Astrocyte of the cerebellum (primary cell): ENCODE measurements at regions of chr10 and their contacts with region 1.

Region 1: DNA sequence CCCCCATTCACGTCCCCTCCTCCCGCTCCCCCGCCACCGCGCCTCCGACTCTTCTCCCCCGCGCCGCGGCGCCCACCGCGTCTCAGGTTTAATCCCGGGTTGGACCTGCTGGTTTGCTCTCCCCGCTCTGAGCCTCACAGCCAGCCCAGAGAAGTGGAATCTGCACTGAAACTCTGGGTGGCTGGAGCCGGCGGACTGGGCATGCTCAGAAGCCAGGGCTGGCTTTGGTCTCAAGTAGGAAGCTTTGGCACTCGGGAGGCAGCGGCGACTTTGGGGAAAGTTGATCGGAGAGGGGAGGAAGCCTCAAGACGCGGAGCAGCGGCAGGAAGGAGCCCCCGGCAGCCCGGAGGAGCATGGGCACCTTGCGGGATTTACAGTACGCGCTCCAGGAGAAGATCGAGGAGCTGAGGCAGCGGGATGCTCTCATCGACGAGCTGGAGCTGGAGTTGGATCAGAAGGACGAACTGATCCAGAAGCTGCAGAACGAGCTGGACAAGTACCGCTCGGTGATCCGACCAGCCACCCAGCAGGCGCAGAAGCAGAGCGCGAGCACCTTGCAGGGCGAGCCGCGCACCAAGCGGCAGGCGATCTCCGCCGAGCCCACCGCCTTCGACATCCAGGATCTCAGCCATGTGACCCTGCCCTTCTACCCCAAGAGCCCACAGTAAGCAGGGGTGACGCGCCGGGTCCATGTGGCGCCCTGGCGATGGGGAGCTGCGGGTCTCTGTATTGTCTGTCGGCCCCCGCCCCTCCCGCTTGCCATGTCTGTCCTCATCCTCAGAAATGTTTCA is at the start of gene PRKG1:
- DNase-seq: peak; percentile 46
- H3K4me3 ChIP-seq: peak within 1 kb of the TSS; percentile 68
- CTCF ChIP-seq: no peak

Region 2: GRCh38 chr10:51145375-51145774 is 70.9 kb after region 1 on chr10:
- in situ Hi-C with region 1: loop called (anchors 5 kb)
- DNase-seq: no peak
- H3K4me3 ChIP-seq: no peak overlapping the region
- CTCF ChIP-seq: no peak

Region 3: GRCh38 chr10:51419196-51420093 is 345.0 kb after region 1 on chr10:
- in situ Hi-C with region 1: loop called (anchors 5 kb)
- DNase-seq: no peak
- H3K4me3 ChIP-seq: no peak overlapping the region
- CTCF ChIP-seq: no peak

Region 4: DNA sequence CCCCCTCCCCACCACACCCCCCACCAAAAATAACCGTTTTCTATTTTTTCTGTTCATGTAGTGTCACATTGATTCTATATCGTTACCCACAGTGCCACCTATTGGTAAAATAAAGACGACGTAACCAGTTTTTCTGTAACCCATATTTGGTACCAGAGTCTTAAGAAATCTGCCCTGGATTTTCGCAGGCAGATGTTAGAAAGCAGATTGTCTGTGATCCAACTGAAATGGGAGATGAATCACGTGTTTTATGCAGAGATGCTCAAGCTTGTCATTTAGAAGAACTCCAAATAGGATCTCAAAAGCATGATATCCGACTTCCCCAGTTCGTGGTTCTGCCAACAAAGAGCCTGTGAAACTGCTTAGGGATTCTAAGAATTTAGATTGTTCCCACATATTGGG is 886.1 kb after region 1 on chr10:
- in situ Hi-C with region 1: loop called (anchors 25 kb)
- DNase-seq: peak; percentile 27
- H3K4me3 ChIP-seq: no peak overlapping the region
- CTCF ChIP-seq: peak; percentile 40